GM18951 (cell line): ENCODE measurements at regions of chr3 and their contacts with region 1.

Region 1: GRCh38 chr3:134473868-134474546 is 11.8 kb downstream of the ANAPC13 start:
- POLR2A ChIP-seq: no peak

Region 2: DNA sequence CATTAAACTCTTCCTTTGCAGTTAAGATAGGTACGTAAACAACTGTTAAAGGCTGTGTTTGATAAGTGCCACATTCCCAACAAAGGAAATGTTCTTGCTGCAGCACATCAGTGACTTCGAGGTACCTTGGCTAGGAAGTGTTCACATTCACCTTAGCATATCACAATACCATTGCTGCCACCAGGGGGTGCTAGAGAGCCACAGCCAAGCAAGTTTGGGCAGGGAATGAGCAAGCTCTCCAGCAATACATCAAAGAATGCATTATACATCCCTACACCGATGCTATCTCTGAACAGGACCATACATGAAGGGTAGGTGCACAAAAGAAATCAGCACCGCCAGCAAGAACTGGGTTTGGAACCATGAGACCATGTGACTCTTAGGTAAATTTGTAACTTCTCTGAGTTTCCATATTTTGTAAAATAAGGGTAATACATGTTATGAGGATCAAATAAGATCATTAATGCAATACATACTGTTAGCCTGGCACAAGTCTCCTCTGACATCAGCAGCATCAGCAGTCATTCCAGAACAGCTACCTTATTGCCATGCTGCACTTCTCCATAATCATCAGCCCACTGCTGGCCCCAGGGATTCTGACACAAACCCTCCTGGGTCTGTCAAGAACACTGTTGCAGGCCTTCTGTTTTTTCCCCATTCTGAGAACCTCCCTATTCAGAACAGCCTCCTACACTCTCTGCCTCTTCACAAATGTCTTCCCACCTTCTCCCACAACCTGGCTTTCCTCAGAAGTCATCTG is 260.9 kb before region 1 on chr3:
- in situ Hi-C with region 1: loop called (anchors 5 kb)
- POLR2A ChIP-seq: no peak

Region 3: GRCh38 chr3:134308350-134308891 is 165.6 kb before region 1 on chr3:
- in situ Hi-C with region 1: loop called (anchors 5 kb)
- POLR2A ChIP-seq: no peak

Region 4: DNA sequence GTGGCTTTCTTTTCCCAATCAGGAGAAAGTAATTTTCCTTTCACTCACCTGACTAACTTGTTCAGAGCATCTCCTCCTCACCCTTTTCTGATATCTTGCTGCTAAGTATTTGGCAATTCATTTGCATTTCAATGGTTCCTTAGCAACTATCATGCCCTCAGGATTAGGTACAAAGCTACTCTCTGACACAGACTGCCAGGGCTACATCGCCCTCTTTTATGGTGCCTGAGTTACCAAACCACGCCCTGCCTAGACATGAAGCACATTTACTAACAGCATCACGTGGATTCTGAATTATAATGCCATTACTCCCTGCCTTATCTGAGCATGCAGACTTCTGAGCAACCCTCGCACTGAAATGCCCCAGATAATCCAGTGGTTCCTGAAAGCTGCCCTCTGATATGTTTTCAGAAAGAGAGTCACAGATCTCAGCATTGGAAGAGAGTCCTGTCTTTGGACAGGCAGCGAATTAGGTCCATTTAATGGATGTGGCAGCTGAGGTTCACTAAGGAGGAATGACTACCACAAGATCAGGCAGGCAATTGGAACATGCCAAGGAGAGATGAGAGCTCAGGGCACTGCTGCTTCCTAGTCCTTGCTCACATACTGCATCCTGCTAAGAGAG is 335.5 kb after region 1 on chr3:
- in situ Hi-C with region 1: no loop called
- POLR2A ChIP-seq: no peak